ENCODE measurements at regions of chr11 and their contacts with region 1.

Region 1: DNA sequence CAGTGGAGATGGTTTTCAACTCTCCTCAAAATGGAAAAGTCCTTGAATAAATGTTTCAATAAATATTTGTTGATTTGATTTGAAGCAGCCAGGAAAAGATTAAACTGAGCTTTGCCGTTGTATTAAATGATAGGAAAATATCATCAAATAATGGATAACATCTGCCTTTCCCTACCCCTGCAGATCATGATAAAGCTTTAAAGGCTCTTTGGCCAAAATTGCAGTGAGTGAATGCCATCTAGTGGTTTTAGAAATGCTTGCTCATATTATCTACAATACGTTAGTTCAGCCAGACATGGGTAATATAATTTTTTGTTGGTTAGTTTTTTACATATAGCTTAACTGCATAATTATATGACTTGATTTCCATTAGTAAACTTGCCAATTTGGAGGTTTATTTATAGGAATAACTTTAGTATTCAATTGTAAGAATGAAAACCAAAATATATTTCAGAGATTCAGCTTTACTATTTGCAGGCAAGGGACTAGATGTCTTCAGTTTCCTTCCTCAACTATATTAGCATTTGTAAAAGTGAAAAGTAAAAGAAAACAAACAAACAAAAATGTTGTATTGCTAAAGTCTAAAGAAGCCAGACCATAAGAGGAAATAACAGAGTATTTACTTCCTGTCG is 159.2 kb downstream of the MSANTD4 start:
- DNase-seq: peak; percentile 41
- ATAC-seq: peak; percentile 84
- H3K4me3 ChIP-seq: no peak overlapping the region
- H3K27ac ChIP-seq: no peak overlapping the region
- H3K4me1 ChIP-seq: no peaks in the 10 kb centered on the region
- H3K27me3 ChIP-seq: no peaks in the 10 kb centered on the region
- CTCF ChIP-seq: peak; percentile 47 to 75 (median 61); a peak in 5 of 6 replicates
- POLR2A ChIP-seq: no peak
- RAD21 ChIP-seq: peak; percentile 85

Region 2: GRCh38 chr11:104254347-104254746 is 1608.5 kb before region 1 on chr11:
- CTCF ChIA-PET with region 1: interaction called, 19 read pairs
- POLR2A ChIA-PET with region 1: no interaction called
- RAD21 ChIA-PET with region 1: no interaction called
- intact Hi-C with region 1: loop called (anchors 1 kb)
- DNase-seq: peak; percentile 46
- ATAC-seq: peak; percentile 100
- H3K4me3 ChIP-seq: no peak overlapping the region
- H3K27ac ChIP-seq: no peak overlapping the region
- H3K4me1 ChIP-seq: no peaks in the 10 kb centered on the region
- H3K27me3 ChIP-seq: no peaks in the 10 kb centered on the region
- CTCF ChIP-seq: peak; percentile 56 to 93 (median 87); a peak in 5 of 6 replicates
- POLR2A ChIP-seq: no peak
- RAD21 ChIP-seq: peak; percentile 80

Region 3: DNA sequence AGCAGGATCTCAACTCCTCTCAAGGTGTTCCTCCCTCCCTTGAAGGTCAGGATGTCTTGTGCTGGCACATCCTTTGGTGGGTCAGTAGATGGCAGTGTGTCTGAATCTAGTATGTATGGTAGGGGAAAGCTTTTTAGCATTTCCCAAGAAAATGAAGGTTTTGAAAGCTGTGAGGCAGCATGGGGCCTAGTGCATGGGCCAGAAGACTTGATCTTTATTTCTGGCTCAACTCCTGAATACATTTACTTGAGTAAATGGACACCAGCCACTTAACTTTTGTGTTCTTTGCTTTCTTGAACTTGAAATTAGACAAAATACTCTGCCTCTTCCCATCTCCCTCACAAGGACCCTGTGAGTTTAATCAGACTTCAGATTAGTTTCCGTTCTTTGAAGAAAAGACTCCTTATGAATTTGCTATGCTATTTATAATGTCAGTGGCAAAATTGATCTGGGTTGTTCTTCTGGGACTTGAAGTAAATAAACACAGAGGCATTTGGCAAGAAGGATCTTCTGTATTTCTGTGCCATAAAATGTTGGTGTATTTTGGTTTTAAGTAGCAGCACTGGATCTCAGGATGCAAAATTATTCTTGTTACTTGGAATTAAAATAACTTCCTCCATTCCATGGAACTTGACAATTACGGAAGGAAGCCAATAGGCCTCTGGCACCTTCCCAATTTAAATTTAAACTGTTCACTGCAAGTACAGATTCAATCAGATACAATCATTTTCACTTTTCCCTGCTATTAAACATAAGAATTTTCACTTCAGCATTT is 1253.4 kb before region 1 on chr11:
- CTCF ChIA-PET with region 1: interaction called, 5 read pairs
- POLR2A ChIA-PET with region 1: no interaction called
- RAD21 ChIA-PET with region 1: interaction called in 1 of 2 experiments, 4 read pairs
- intact Hi-C with region 1: loop called (anchors 2 kb)
- DNase-seq: peak; percentile 28
- ATAC-seq: peak; percentile 99
- H3K4me3 ChIP-seq: no peak overlapping the region
- H3K27ac ChIP-seq: no peak overlapping the region
- H3K4me1 ChIP-seq: no peaks in the 10 kb centered on the region
- H3K27me3 ChIP-seq: no peaks in the 10 kb centered on the region
- CTCF ChIP-seq: peak; percentile 35 to 75 (median 74); a peak in 5 of 6 replicates
- POLR2A ChIP-seq: no peak
- RAD21 ChIP-seq: peak; percentile 64

Region 4: GRCh38 chr11:104946907-104947306 is 915.9 kb before region 1 on chr11:
- CTCF ChIA-PET with region 1: interaction called, 5 read pairs
- POLR2A ChIA-PET with region 1: no interaction called
- RAD21 ChIA-PET with region 1: no interaction called
- intact Hi-C with region 1: loop called (anchors 2 kb)
- DNase-seq: peak; percentile 35
- ATAC-seq: peak; percentile 79
- H3K4me3 ChIP-seq: no peak overlapping the region
- H3K27ac ChIP-seq: no peak overlapping the region
- H3K4me1 ChIP-seq: no peaks in the 10 kb centered on the region
- H3K27me3 ChIP-seq: no peaks in the 10 kb centered on the region
- CTCF ChIP-seq: peak; percentile 21 to 65 (median 47); a peak in 4 of 6 replicates
- POLR2A ChIP-seq: no peak
- RAD21 ChIP-seq: peak; percentile 47

Region 5: DNA sequence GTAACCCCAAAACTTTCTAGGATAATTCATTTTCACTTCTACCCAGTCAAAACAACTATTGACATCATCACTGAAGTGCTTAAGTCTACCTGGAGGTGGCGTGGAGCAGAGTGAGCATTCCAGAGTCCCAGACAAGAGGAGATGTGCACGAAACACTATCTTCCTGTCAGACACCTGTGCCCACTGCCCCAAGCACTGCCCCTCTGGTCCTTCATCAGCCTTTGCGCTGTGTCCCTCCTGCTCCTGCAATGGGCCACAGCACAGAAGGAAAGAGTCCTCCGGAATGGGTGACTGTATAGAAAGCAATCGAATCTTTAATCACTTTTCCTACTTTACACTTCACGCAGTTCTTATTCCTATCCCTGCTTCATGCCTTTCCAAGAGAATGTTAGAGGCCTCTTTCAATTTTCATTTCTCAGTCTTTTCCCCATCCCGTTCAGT is 253.5 kb before region 1 on chr11:
- CTCF ChIA-PET with region 1: no interaction called
- POLR2A ChIA-PET with region 1: no interaction called
- RAD21 ChIA-PET with region 1: no interaction called
- intact Hi-C with region 1: loop called (anchors 5 kb)
- DNase-seq: peak; percentile 23
- ATAC-seq: peak; percentile 96
- H3K4me3 ChIP-seq: no peak overlapping the region
- H3K27ac ChIP-seq: no peak overlapping the region
- H3K4me1 ChIP-seq: no peaks in the 10 kb centered on the region
- H3K27me3 ChIP-seq: 0 out of 2 replicates have a peak, but pooled peaks cover 9% of the 10 kb centered on the region
- CTCF ChIP-seq: peak in 2 of 3 experiments; percentile 57 to 66; a peak in 4 of 6 replicates
- POLR2A ChIP-seq: no peak
- RAD21 ChIP-seq: peak; percentile 34; the same call in 1 of the 2 replicates

Measured in HCT116 (cell line).